Pancreas (tissue), 10 donors: ENCODE measurements at regions of chr20 and their contacts with region 1.

Region 1: DNA sequence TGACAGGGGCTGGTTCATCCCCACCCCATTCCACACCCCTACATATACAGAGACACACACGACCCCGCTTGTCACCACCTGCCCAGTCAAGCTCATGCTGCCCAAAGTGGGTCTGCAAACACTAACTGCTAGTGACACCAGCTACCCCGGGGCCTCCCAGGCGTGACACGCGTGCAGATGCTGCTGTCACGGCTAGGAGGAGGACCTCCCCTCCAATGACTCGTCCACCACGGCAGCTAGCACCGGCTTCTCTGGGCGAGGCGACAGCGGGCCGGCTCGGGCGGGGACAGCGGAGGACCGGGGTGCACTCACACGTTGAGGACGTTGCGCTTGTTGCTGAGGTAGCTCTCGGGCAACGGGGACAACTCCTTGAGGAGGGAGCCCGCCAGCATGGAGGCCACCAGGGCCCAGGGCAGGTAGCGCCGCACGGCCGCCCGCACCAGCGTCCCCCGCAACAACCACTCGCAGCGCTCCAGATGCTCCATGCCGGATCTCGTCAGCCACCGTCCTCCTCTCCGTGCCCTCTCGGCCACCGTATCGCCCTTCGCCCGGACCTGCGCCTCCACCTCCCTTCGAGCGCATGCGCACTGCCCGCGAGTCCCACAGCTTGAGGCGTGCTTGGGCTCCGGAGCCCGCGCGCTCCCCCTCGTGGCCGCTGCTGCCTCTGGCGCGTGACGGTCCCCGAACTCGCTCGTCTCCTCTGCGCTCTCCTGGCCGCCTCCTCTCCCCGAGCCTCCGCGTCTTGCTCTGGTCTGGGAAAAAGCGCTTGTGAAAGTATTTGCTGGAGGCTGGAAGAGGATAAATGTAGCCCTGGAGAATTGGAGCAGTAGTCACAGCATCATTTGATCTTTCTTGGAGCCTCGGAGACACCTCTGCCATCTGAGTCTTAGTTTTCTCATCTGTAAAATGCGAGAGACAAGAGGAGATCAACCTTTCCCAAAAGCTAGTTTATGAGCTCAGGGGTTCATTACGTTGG is at the start of gene FITM2:
- DNase-seq: peak; percentile 97 to 100 (median 98)
- ATAC-seq: peak; percentile 98 to 100 (median 98)
- H3K4me3 ChIP-seq: peak within 1 kb of the TSS; percentile 67 to 94 (median 84)
- H3K27ac ChIP-seq: peak within 1 kb of the TSS in 3 of 4 donors; percentile 5 to 42 (median 35)
- H3K4me1 ChIP-seq: peaks cover 0 to 5% (median 3%) of the 10 kb centered on the region in 3 donors
- H3K27me3 ChIP-seq: no peaks in the 10 kb centered on the region
- CTCF ChIP-seq: peak; percentile 92 to 95 (median 94)
- total RNA-seq, gene FITM2: 5.3 to 7.4 (median 5.9) TPM

Region 2: DNA sequence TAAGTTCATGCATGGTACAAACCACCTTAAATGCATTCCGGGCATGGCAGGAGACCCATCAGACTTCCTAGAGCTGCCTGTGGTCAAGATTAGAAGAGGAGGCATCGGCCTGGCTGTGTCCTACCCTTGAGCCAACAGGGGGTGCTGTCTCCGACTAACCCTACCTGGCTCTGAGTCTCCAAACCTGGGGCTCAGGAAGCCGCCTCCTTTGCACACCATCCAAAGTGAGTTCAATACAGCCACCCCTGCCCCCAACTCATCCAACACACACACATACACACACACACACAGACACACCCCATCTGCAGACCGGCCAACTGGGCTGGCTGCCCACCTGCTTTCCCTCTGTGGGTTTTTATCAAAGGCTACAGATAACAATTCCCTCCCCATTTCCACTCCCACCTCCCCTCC is 201.0 kb before region 1 on chr20:
- intact Hi-C with region 1: loop called in 1 of 3 experiments (anchors 10 kb)
- DNase-seq: no peak
- ATAC-seq: no peak
- H3K4me3 ChIP-seq: no peak overlapping the region
- H3K27ac ChIP-seq: no peak overlapping the region
- H3K4me1 ChIP-seq: no peaks in the 10 kb centered on the region
- H3K27me3 ChIP-seq: no peaks in the 10 kb centered on the region
- CTCF ChIP-seq: no peak

Region 3: DNA sequence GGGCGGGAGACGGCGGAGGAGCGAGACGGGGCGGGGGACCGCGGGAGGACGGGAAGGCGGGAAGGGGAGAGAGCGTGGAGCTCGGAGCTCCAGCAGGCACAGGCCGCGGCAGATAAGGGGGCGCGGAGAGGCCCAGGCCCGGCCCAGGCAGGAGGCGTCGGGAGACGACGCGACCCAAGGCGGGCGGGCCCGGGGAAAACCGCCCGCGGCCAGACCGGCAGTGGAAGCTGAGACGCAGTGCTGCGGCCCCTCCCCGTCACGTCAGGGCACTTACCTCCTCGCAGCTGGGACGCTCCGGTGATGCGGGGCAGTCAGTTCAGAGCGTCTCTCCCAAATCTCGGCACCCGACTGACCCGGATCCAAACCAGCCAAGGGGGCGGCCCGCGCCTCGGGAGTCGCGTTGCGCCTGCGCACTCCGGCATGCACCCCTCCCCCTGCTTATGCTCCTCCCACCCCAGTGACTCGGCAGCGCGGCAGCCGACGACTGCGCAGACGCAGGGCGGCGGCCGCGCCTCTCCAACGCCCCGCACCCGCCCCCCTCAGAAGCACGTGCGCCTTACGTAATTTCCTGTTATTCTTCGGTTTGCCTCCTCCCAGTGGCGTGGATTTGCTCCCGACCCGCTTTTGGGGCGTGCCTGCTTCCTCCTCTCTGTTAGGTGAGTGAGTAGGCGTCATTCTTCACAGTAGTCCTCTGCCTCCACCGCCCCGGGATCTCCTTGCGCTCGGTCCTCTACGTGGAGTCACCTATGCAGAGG is 100.4 kb before region 1 on chr20 and contains the start of gene OSER1:
- intact Hi-C with region 1: loop called in 2 of 3 experiments (anchors 5 to 10 kb)
- DNase-seq: peak; percentile 96 to 99 (median 98)
- ATAC-seq: peak; percentile 89 to 96 (median 93)
- H3K4me3 ChIP-seq: peak within 1 kb of the TSS; percentile 49 to 94 (median 87)
- H3K27ac ChIP-seq: peak within 1 kb of the TSS; percentile 81 to 98 (median 92)
- H3K4me1 ChIP-seq: peaks cover 17 to 32% (median 30%) of the 10 kb centered on the region in 3 donors
- H3K27me3 ChIP-seq: no peaks in the 10 kb centered on the region
- CTCF ChIP-seq: no peak
- total RNA-seq, gene OSER1: 8.0 to 13.5 (median 11.1) TPM

Region 4: GRCh38 chr20:44217342-44218092 is 93.4 kb before region 1 on chr20:
- intact Hi-C with region 1: loop called in 2 of 3 experiments (anchors 5 to 10 kb)
- DNase-seq: peak; percentile 62 to 79 (median 72)
- ATAC-seq: peak; percentile 70 to 89 (median 87)
- H3K4me3 ChIP-seq: no peak overlapping the region
- H3K27ac ChIP-seq: no peak overlapping the region
- H3K4me1 ChIP-seq: peaks cover 0 to 2% (median 0%) of the 10 kb centered on the region in 3 donors
- H3K27me3 ChIP-seq: no peaks in the 10 kb centered on the region
- CTCF ChIP-seq: peak; percentile 80 to 86 (median 86)

Region 5: DNA sequence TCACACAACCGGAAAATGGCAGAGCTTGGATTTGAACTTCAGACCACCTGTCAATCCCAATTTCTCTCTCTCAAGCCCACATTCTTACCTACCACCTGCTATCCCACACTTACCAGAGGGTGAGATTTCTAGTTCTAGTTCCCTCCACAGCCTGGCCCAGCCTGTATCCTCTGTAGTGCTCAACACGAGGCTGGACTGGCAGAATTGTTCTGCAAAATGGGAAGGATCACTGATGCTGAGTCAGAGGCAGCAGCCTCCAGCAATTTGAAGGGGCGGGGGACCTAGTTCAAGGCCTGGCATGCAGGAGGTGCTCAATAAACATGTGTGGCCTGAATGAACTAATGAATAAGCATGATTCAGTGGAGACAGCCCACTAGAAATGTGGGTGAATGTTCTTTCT is 111.1 kb after region 1 on chr20:
- intact Hi-C with region 1: no loop called
- DNase-seq: no peak
- ATAC-seq: no peak
- H3K4me3 ChIP-seq: no peak overlapping the region
- H3K27ac ChIP-seq: no peak overlapping the region
- H3K4me1 ChIP-seq: no peaks in the 10 kb centered on the region
- H3K27me3 ChIP-seq: no peaks in the 10 kb centered on the region
- CTCF ChIP-seq: no peak